Activated CD4-positive, alpha-beta T cell treated with anti-CD3 and anti-CD28 coated beads for 36 hours (primary cell): ENCODE measurements at regions of chr22 and their contacts with region 1.

Region 1: DNA sequence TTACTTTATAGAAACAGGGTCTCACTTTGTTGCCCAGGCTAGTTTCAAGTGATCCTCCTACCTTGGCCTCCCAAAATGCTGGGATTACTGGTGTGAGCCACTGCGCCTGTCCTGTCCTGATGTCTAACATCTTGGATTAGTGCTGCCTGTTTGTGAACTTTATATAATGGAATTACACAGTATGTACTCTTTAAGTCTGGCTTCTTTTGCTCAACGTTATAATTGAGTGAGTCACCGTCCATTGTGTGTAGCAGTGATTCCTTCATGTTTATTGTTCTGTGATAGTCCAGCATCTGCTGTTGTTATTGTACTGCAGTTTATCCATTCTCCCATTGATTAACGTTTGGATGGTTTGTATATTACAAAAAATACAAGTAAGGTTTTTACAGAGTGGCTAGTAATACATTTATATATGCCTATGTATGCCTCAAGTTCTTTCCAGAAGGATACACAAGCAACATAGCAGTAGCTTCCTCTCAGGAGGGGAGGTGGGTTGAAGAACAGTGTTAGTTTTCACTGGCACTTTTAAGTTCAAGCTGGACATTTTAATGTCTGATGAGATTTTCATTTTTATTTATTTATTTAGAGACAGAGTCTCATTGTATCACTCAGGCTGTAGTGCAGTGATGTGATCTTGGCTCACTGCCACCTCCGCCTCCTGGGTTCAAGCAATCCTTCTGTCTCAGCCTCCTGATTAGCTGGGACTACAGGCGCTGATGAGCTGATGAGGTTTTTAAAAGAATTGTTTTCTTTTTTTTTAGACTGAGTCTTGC is 25.2 kb upstream of the MICALL1 start:
- DNase-seq: no peak
- ATAC-seq: no peak
- H3K4me3 Mint-ChIP-seq: no peak overlapping the region
- H3K27ac Mint-ChIP-seq: no peak overlapping the region
- H3K4me1 Mint-ChIP-seq: peaks cover 4% of the 10 kb centered on the region
- H3K27me3 Mint-ChIP-seq: no peaks in the 10 kb centered on the region

Region 2: GRCh38 chr22:37870273-37870672 is 10.6 kb before region 1 on chr22:
- CTCF ChIA-PET with region 1: interaction called, 10 read pairs
- POLR2A ChIA-PET with region 1: no interaction called
- intact Hi-C with region 1: no loop called
- DNase-seq: no peak
- ATAC-seq: no peak
- H3K4me3 Mint-ChIP-seq: no peak overlapping the region
- H3K27ac Mint-ChIP-seq: no peak overlapping the region
- H3K4me1 Mint-ChIP-seq: no peaks in the 10 kb centered on the region
- H3K27me3 Mint-ChIP-seq: no peaks in the 10 kb centered on the region